AG04450 (cell line): ENCODE measurements at regions of chr15 and their contacts with region 1.

Region 1: GRCh38 chr15:32870240-32871033 is 152.6 kb downstream of the GREM1 start:
- DNase-seq: peak; percentile 97
- H3K4me3 ChIP-seq: no peak overlapping the region
- H3K27ac ChIP-seq: peak overlapping the region; percentile 97
- H3K27me3 ChIP-seq: no peaks in the 10 kb centered on the region
- CTCF ChIP-seq: no peak

Region 2: DNA sequence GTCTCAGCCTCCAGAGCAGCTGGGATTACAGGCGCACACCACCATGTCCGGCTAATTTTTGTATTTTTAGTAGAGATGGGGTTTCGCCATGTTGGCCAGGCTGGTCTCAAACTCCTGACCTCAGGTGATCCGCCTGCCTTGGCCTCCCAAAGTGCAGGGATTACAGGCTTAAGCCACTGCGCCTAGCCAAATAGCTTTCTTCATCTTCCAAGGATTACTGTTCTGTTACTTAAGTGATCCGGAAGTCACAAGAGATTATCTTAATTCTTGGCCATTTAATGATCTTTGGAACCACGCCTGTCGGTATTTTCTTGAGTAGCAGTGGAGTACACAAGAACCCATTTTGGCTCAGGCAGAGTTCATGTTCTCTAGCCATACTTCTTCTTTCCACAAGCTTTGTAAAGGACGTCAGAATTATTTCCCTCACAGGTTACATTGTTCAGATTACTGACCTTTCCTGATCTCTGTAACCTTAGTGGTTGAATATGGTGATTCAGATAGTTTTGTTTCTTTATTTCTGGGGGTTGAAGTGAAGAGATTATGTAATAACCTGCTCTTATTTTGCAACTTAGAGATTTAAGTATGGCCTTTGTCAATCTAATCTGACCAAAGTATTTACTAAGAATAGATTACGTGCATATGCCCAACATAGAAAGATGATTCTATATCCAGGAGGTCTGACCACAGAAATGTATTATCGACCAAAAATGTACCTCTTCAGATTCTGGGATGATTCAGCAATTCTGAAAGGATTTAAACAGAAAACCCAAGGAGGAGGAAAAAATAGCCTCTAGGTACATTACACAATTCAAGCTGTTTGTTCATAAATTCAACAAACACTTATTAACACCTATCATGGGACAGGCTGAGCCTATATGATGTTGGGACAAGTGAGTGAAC is 20.4 kb before region 1 on chr15:
- CTCF ChIA-PET with region 1: interaction called, 4 read pairs
- POLR2A ChIA-PET with region 1: interaction called, 21 read pairs
- DNase-seq: peak; percentile 86
- H3K4me3 ChIP-seq: no peak overlapping the region
- H3K27ac ChIP-seq: peak overlapping the region; percentile 98
- H3K27me3 ChIP-seq: no peaks in the 10 kb centered on the region
- CTCF ChIP-seq: no peak

Region 3: DNA sequence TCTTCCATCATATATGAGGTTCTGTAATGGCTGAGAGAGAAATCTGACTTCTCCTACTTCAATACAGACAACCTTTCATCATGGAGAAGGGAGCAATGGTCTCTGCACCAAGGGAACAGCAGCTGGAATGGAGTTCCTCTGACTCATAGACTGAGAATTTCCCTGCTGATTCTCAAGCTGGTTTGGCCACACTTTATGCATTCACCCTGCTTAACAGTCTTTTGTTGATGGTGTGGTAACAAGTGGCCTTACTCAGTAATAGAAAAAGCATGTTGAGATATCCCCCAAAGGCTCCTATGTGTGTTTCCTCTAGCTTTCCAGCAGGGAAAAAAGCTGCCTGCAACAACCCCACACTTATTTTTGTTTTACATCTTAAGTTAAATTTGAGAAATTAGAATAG is 14.5 kb before region 1 on chr15:
- CTCF ChIA-PET with region 1: interaction called, 3 read pairs
- POLR2A ChIA-PET with region 1: interaction called, 21 read pairs
- DNase-seq: peak; percentile 97
- H3K4me3 ChIP-seq: no peak overlapping the region
- H3K27ac ChIP-seq: peak overlapping the region; percentile 94
- H3K27me3 ChIP-seq: no peaks in the 10 kb centered on the region
- CTCF ChIP-seq: peak; percentile 37; the same call in 1 of the 2 replicates

Region 4: GRCh38 chr15:33059184-33059583 is 188.7 kb after region 1 on chr15:
- CTCF ChIA-PET with region 1: no interaction called
- POLR2A ChIA-PET with region 1: no interaction called
- DNase-seq: peak; percentile 15
- H3K4me3 ChIP-seq: no peak overlapping the region
- H3K27ac ChIP-seq: no peak overlapping the region
- H3K27me3 ChIP-seq: no peaks in the 10 kb centered on the region
- CTCF ChIP-seq: no peak